ENCODE measurements at regions of chr19 and their contacts with region 1.

Region 1: DNA sequence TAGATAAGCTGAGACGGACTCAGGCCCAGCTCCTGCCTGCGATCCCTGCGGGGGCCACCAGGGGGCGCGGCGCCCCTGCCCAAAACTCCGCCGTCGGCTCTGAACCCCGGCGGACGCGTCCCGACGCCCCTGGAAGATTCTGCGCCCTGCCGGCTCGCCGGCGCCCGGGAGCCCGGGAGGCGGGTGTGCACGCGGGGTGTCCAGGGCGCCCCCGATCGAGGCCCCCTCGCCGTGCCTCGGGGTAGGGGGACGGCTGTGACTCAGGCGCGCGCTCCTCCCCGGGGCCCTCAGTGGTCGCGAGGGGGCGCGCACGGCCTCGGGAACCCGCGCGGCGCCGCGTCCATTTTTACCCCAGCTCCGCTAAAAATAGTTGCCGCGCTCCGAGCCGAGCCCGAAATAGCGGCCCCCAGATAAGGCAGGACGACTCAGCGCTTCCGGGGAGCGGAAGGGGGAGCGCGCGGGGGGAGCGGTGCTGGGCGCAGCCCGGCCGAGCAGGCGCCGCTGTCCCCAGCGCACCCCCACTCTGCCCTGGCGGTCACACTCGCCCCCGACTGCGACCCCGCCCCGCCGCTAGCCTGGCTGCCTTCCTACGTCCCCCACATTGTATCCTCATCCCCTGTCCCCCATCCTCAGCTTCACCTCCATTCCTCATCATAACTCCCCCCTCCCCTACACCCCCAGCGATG is 16.0 kb upstream of the ERCC1 start:
- DNase-seq: peak in 1 of 2 experiments; percentile 86
- H3K4me3 ChIP-seq: peak overlapping the region; percentile 83
- H3K27ac ChIP-seq: no peak overlapping the region
- H3K4me1 ChIP-seq: peaks cover 17% of the 10 kb centered on the region
- H3K27me3 ChIP-seq: no peaks in the 10 kb centered on the region
- CTCF ChIP-seq: peak; percentile 100

Region 2: GRCh38 chr19:45455707-45456499 is 16.2 kb after region 1 on chr19:
- CTCF ChIA-PET with region 1: interaction called, 5 read pairs
- POLR2A ChIA-PET with region 1: no interaction called
- intact Hi-C with region 1: loop called (anchors 1 kb)
- DNase-seq: peak; percentile 98
- H3K4me3 ChIP-seq: peak overlapping the region; percentile 53; the same call in 1 of the 2 replicates
- H3K27ac ChIP-seq: peak overlapping the region; percentile 93
- H3K4me1 ChIP-seq: peaks cover 38% of the 10 kb centered on the region
- H3K27me3 ChIP-seq: no peaks in the 10 kb centered on the region
- CTCF ChIP-seq: no peak

Region 3: GRCh38 chr19:45478454-45479238 is 38.9 kb after region 1 on chr19:
- CTCF ChIA-PET with region 1: interaction called, 59 read pairs
- POLR2A ChIA-PET with region 1: interaction called, 7 read pairs
- intact Hi-C with region 1: loop called (anchors 1 kb)
- DNase-seq: peak; percentile 87 to 90
- H3K4me3 ChIP-seq: peak overlapping the region; percentile 62
- H3K27ac ChIP-seq: peak overlapping the region; percentile 83
- H3K4me1 ChIP-seq: peaks cover 12% of the 10 kb centered on the region
- H3K27me3 ChIP-seq: no peaks in the 10 kb centered on the region
- CTCF ChIP-seq: peak; percentile 99

Region 4: DNA sequence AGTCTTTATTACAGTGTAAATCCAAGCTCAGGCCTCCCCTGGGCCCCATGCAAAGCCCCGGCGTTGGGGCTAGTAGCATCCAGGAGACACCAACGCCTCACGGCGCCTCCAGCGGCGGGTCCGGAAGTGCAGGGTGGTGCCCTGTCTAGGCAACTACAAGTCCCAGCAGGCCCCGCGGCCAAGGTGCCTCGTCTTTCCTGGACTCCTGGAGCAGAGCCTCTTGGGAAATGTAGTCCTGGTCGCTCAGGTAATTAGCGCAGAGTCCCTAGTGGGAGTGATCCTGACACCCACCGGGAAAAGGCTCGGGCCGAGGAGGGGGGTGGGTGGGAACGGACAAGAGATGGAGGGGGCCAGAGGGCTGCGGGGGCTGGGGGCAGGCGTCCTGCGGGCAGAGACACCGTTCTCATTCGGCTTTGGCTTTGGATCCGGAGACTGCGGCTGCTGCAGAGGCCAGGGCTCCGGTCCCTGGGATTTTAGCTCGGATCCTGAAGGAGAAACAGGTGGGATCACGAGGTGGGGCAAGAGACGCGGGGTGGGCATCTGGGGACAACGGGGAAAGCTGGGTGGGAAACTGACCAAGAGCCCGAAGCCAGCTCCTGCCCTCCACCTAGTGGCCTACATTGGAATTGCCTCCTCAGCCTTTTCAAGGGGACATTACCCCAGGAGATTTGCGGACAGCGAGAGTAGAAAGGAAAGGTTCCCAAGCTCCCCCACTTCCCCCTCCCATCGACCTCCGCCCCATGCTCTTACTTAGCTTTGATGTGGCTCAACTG is 45.8 kb after region 1 on chr19:
- CTCF ChIA-PET with region 1: interaction called, 59 read pairs
- POLR2A ChIA-PET with region 1: interaction called, 7 read pairs
- intact Hi-C with region 1: no loop called
- DNase-seq: peak; percentile 91 to 97
- H3K4me3 ChIP-seq: peak overlapping the region; percentile 62
- H3K27ac ChIP-seq: no peak overlapping the region
- H3K4me1 ChIP-seq: no peaks in the 10 kb centered on the region
- H3K27me3 ChIP-seq: no peaks in the 10 kb centered on the region
- CTCF ChIP-seq: peak; percentile 87

Measured in PC-9 (cell line).